ENCODE measurements at regions of chr6 and their contacts with region 1.

Region 1: DNA sequence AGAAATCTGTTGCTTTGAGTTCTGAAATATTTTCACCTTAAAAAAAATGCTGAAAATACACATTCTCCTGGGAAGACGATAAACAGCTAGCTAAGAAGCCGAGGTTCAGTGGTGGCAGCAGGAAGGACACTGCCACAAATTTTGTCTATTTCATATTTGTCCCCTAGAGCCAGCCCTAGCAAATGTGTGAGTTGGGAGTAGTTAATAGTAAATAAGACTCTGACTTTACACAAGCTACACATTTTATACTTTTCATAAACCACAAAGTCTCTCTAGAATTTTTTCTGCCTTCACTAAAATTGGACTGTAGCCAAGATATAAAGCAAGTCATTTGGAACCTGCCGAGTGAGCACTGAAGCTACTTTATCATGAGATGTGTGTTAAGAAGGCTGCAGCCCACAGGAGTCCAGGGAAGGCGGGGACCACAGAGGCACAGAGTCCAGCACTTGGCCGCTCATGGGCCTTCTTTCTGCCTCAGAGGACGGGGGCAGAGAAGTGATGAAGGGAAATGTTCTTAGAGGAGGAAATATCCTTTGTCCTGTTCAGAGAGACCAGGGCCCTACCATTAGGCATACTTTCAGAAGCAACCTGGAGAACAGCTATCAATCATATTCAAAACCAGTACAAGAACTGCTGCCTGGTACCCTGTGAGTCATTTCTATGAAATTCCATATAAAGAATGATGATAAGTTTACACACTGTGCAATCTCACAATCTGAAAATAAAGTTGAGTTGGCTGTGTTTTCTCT is 241.7 kb upstream of the TAB2 start:
- DNase-seq: no peak
- H3K4me3 Mint-ChIP-seq: no peak overlapping the region
- H3K27ac Mint-ChIP-seq: peak overlapping the region; percentile 85
- H3K4me1 Mint-ChIP-seq: peaks cover 48% of the 10 kb centered on the region
- H3K27me3 Mint-ChIP-seq: no peaks in the 10 kb centered on the region

Region 2: DNA sequence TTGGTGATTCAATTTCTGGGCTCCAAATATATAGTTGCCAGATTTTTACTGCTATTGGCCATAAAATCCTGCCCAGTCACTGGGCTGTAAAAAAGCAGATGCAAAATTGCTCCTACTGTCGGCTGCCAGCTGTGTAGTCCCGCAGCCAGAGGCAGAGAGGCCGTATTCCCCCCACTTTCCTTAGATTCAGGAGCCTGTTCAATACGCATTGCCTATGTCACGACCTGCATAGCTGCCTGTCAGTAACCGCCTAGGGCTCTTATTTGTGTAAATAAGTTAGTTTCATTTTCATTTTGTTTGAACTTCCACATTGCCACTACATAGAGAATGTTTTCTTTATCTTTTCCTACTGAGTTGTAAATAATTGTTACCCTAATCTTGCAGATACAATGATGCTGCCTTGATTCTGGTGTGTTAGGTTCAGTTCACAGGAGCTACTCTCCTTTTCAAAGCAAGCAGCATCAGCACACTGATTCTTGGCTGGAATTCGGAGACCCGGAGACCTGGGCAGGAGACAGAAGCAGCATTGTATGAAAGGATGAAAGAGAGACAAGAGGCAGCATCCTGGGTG is 375.0 kb before region 1 on chr6:
- intact Hi-C with region 1: no loop called
- DNase-seq: peak; percentile 16
- H3K4me3 Mint-ChIP-seq: peak overlapping the region; percentile 76
- H3K27ac Mint-ChIP-seq: peak overlapping the region; percentile 41
- H3K4me1 Mint-ChIP-seq: peaks cover 13% of the 10 kb centered on the region
- H3K27me3 Mint-ChIP-seq: peaks cover 10% of the 10 kb centered on the region

Region 3: GRCh38 chr6:148999929-149000468 is 75.8 kb before region 1 on chr6:
- intact Hi-C with region 1: no loop called
- DNase-seq: no peak
- H3K4me3 Mint-ChIP-seq: peak overlapping the region; percentile 7
- H3K27ac Mint-ChIP-seq: peak overlapping the region; percentile 6
- H3K4me1 Mint-ChIP-seq: peaks cover 14% of the 10 kb centered on the region
- H3K27me3 Mint-ChIP-seq: peaks cover 9% of the 10 kb centered on the region

Region 4: DNA sequence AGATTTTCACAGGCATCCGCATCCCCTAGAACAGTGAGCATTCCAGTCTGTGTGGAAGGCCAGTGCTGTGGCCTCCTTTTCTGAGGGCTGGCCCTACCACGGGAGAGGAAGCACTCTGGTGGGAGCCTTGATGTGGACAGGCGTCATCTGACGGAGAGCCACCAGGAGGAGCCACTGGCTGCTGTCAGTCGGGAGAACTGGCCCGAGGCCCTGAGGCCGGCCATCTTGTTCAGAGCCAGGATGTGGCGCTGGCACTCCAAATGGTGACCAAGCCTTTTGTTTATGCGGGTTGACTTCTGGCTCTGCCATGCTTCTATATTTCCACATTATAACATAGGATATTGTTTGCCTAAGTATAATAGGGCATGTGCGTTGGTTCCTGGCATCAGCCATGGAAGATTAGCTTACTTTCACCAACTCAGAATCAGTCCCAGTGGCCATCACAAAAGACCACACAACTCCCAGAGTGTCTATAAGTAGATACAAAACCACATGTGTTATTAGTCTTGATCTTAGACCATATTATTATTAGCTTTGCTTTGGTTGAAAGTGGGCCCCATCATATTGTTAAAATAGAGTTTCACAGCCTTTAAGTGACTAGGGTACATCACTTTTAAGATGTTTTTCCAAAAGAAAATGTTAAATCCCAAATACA is 32.2 kb before region 1 on chr6:
- intact Hi-C with region 1: loop called (anchors 2 kb)
- DNase-seq: no peak
- H3K4me3 Mint-ChIP-seq: no peak overlapping the region
- H3K27ac Mint-ChIP-seq: no peak overlapping the region
- H3K4me1 Mint-ChIP-seq: peaks cover 48% of the 10 kb centered on the region
- H3K27me3 Mint-ChIP-seq: no peaks in the 10 kb centered on the region

Region 5: GRCh38 chr6:149060300-149060997 is 15.3 kb before region 1 on chr6:
- intact Hi-C with region 1: loop called (anchors 2 kb)
- DNase-seq: peak; percentile 63
- H3K4me3 Mint-ChIP-seq: peak overlapping the region; percentile 69
- H3K27ac Mint-ChIP-seq: peak overlapping the region; percentile 88
- H3K4me1 Mint-ChIP-seq: peaks cover 64% of the 10 kb centered on the region
- H3K27me3 Mint-ChIP-seq: no peaks in the 10 kb centered on the region

Region 6: DNA sequence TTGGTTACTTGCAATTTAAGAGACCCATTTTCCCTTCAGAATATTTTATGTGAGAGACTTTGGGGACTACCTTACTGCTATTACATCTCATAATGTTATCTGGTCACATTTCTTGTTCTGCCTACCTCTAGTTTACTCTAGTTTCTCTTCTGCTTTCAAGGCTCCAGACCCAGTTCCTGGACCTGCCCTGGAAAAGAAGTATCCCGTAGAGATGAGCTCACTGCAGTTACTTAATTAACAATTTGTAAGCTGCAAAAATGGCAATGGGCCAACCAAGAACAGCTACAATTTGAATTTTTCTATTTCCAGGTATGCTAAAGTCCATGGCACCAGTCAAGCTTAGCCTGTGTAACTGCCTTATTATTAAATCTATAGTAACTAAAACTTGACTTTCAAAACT is 266.7 kb after region 1 on chr6:
- intact Hi-C with region 1: no loop called
- DNase-seq: no peak
- H3K4me3 Mint-ChIP-seq: peak overlapping the region; percentile 35
- H3K27ac Mint-ChIP-seq: peak overlapping the region; percentile 85
- H3K4me1 Mint-ChIP-seq: peaks cover 64% of the 10 kb centered on the region
- H3K27me3 Mint-ChIP-seq: no peaks in the 10 kb centered on the region

Region 7: DNA sequence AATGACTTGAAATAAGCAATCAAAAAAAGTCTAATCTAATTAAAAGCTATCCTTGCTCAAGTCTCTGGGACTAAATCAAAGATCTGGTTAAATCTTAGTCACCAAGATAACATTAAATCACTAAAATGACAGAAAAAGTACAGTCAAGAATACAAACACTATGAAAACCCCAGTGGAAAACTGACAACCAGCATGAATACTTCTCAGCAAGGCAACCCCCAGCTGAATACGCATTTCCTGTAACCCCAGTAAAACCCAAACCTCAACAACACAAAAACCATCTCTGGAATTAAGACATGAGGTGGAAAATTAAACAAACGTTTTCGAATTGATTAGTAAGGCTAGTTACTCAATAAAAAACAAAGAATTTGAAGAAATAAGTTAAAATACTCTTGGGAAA is 432.7 kb after region 1 on chr6:
- intact Hi-C with region 1: loop called (anchors 2 kb)
- DNase-seq: no peak
- H3K4me3 Mint-ChIP-seq: no peak overlapping the region
- H3K27ac Mint-ChIP-seq: peak overlapping the region; percentile 59
- H3K4me1 Mint-ChIP-seq: peaks cover 27% of the 10 kb centered on the region
- H3K27me3 Mint-ChIP-seq: no peaks in the 10 kb centered on the region